MCF 10A (cell line): ENCODE measurements at regions of chr16 and their contacts with region 1.

Region 1: GRCh38 chr16:67561824-67562525 is 351 bp upstream of the CTCF start:
- DNase-seq: peak; percentile 96
- H3K4me3 Mint-ChIP-seq: peak overlapping the region; percentile 88
- H3K27ac Mint-ChIP-seq: peak overlapping the region; percentile 81
- H3K4me1 Mint-ChIP-seq: peaks cover 7% of the 10 kb centered on the region
- H3K27me3 Mint-ChIP-seq: no peaks in the 10 kb centered on the region
- CTCF ChIP-seq: no peak

Region 2: DNA sequence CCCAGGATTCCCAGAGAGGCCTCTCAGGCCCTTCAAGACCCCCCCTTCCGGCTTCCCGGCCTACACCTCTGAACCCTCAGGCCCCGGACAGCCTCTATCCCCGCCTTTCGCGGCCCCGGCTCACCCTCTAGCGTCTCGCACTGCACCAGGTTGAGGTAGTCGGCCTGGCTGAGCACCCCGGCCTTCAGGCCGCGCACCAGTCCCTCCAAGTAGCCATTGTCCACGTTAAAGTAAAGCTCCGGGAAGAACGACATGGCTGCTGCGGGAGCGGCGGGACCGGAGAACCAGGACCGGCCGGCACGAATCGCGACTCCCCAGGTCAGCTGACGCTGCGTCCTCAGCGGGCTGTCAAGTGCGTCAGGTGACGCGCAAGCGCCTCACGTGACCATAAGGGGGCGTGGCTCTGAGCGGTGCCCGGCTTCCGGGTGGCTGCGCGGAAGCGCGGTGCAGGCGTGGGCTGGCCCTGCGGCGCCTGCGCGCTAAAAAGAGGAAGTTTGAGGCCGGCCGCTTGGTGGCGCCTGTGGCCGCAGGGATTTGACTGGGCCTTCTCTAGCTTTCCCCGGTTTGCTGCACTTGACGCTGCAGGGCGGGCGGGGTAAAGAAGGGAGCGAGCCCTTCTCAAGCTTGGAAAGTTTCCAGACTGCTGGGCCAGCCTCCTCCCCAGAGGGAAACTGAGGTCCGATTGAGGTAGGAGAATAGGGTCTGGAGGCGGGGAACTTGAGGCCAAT is 81.0 kb before region 1 on chr16 and contains the start of gene ATP6V0D1:
- CTCF ChIA-PET with region 1: interaction called, 10 read pairs
- POLR2A ChIA-PET with region 1: interaction called, 7 read pairs
- intact Hi-C with region 1: no loop called
- DNase-seq: peak; percentile 96
- H3K4me3 Mint-ChIP-seq: peak within 1 kb of the TSS; percentile 98
- H3K27ac Mint-ChIP-seq: peak within 1 kb of the TSS; percentile 97
- H3K4me1 Mint-ChIP-seq: peaks cover 22% of the 10 kb centered on the region
- H3K27me3 Mint-ChIP-seq: no peaks in the 10 kb centered on the region
- CTCF ChIP-seq: peak; percentile 79
- total RNA-seq, gene ATP6V0D1: 50.5 and 50.7 TPM in 2 replicates

Region 3: GRCh38 chr16:67571981-67572431 is 10.0 kb after region 1 on chr16:
- CTCF ChIA-PET with region 1: interaction called, 10 read pairs
- POLR2A ChIA-PET with region 1: interaction called, 20 read pairs
- intact Hi-C with region 1: no loop called
- DNase-seq: peak; percentile 12
- H3K4me3 Mint-ChIP-seq: no peak overlapping the region
- H3K27ac Mint-ChIP-seq: peak overlapping the region; percentile 80
- H3K4me1 Mint-ChIP-seq: peaks cover 8% of the 10 kb centered on the region
- H3K27me3 Mint-ChIP-seq: no peaks in the 10 kb centered on the region
- CTCF ChIP-seq: no peak

Region 4: DNA sequence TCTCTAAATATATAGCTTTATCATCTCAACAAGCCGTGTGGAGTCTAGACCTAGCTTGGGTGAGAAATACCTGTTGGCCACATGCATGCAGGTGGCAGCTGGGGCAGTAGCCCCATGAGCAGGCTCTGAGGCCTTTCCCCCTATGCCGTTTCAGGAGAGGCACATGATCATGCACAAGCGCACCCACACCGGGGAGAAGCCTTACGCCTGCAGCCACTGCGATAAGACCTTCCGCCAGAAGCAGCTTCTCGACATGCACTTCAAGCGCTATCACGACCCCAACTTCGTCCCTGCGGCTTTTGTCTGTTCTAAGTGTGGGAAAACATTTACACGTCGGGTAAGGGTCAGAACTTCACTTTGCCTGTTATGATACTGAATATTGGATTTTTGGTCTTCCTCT is 66.2 kb after region 1 on chr16:
- CTCF ChIA-PET with region 1: no interaction called
- POLR2A ChIA-PET with region 1: no interaction called
- intact Hi-C with region 1: no loop called
- DNase-seq: no peak
- H3K4me3 Mint-ChIP-seq: no peak overlapping the region
- H3K27ac Mint-ChIP-seq: no peak overlapping the region
- H3K4me1 Mint-ChIP-seq: no peaks in the 10 kb centered on the region
- H3K27me3 Mint-ChIP-seq: no peaks in the 10 kb centered on the region
- CTCF ChIP-seq: no peak

Region 5: DNA sequence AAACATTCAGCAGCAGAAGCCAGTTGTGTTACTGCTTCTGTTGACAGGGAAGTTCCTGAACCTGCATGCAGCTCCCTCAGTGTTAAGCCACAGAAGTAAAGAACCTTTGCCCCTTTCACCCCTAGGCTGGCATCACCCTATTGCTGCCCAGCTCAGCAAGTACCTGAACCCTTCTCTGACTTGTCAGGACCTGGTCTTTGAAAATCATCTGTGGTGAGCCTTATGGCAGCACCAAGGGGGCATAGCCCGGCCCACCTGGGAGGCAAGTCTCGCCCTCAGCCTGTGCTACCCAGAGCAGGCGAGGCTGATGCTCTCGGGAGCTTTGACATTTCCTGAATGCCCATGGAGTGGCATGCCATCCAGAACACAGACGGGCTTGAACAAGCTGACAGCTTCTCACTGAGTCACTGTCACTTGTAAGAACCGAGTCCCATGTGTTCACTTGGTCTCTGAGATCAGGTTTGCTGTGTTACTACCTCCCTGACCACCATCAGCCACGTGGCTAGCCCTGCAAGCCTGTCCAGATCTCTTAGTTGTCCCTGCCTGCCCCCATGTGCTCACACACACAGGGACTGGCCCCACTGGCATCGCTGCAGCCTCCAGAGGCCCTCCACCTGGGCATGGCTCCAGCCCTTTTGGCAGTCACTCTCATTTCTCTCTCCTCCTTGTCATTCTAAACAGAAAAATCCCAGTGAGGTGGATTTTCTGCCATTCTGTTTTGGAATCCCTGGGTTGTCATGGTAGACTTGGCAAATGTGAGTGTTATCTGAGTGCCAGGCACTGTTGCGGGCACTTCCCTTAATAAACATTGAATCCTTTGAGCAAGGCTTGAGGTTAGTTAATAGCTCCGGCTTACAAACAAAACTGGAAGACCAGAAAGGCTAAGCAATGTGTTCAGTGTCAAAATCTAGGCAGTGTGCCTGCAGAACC is 80.1 kb after region 1 on chr16:
- CTCF ChIA-PET with region 1: interaction called, 4 read pairs
- POLR2A ChIA-PET with region 1: interaction called, 4 read pairs
- intact Hi-C with region 1: loop called (anchors 5 kb)
- DNase-seq: peak; percentile 49
- H3K4me3 Mint-ChIP-seq: no peak overlapping the region
- H3K27ac Mint-ChIP-seq: no peak overlapping the region
- H3K4me1 Mint-ChIP-seq: peaks cover 5% of the 10 kb centered on the region
- H3K27me3 Mint-ChIP-seq: no peaks in the 10 kb centered on the region
- CTCF ChIP-seq: no peak

Region 6: GRCh38 chr16:67667817-67668494 is 106.0 kb after region 1 on chr16:
- CTCF ChIA-PET with region 1: interaction called, 4 read pairs
- POLR2A ChIA-PET with region 1: interaction called, 7 read pairs
- intact Hi-C with region 1: loop called (anchors 1 kb)
- DNase-seq: peak; percentile 82
- H3K4me3 Mint-ChIP-seq: no peak overlapping the region
- H3K27ac Mint-ChIP-seq: no peak overlapping the region
- H3K4me1 Mint-ChIP-seq: peaks cover 7% of the 10 kb centered on the region
- H3K27me3 Mint-ChIP-seq: no peaks in the 10 kb centered on the region
- CTCF ChIP-seq: peak; percentile 63